ENCODE measurements at regions of chrX and their contacts with region 1.

Region 1: DNA sequence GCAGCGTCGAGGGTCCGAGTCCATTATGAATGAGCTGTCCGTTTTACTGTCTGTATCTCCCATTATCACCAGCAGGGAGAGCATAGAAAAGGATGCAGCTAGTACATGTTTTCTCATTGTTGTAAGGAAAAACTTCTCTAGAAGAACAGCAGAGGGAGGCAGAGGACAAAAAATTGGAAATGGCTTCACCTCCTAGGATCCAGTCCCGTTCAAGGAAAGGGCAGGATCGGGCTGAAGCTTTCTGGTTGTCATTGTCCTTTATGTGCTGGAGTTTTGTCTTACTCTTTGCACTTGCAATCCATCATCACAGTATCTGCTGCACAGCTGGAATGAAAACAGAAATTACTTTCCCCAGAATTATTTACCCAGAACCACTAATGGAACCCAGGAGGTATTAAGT is 14.7 kb downstream of the NDP start:
- DNase-seq: no peak
- ATAC-seq: peak; percentile 70 to 84

Region 2: GRCh38 chrX:44244008-44244407 is 285.5 kb after region 1 on chrX:
- intact Hi-C with region 1: loop called in 1 of 2 experiments (anchors 10 kb)
- DNase-seq: no peak
- ATAC-seq: no peak

Region 3: GRCh38 chrX:45186643-45187026 is 1228.1 kb after region 1 on chrX:
- intact Hi-C with region 1: loop called in 1 of 2 experiments (anchors 5 kb)
- DNase-seq: no peak
- ATAC-seq: no peak

Measured in left cardiac atrium (tissue), 4 donors.